CD8-positive, alpha-beta T cell (primary cell): ENCODE measurements at regions of chr5 and their contacts with region 1.

Region 1: DNA sequence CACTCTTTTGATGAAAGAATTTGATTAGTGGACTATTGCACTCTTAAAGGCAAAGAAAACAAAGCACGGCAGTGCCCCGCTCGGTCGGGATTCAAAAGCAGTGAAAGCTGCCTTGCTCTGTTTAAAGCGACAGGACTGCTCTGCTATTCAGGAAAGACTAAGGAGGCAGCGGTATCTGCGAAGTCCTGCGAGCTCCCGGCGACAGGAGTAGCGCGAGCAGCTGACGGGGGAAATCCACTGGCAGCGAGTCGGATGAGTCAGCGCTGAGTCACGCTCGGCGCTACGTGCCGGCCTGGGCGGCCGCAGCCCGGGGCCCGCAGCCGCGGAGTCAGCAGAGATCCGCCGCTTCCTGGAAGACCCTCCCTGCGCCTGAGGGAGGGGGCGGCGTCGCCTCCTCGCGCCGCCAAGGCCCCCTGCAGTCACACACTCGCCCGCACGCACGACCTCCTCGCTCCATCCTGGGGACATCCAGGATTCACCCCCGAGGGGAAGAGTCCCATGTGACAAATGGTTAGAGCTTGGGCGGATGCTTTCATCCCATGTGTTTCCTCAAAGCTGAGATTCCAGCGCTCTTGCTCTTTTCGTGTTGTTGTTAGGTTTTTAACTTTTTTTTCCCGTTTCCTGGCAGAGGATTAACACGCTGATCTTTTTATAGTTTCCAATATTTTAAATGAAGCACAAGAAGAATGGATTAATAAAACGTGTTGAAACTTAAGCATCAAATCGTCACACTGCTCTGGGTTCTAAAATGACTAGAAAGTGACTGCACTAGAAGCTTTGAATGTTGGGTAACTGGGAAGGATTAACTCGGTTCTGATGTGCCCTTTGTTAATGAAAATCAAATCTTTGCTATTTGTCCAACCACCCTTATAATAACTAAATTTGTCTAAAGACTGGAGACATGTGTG is 102.5 kb downstream of the ARRDC3 start:
- DNase-seq: peak; percentile 53 to 95 (median 85)
- ATAC-seq: peak; percentile 84
- H3K4me3 ChIP-seq: peak overlapping the region; percentile 58 to 79
- H3K4me3 Mint-ChIP-seq: peak overlapping the region; percentile 84
- H3K27ac ChIP-seq: peak overlapping the region; percentile 16 to 28
- H3K27ac Mint-ChIP-seq: peak overlapping the region; percentile 84
- H3K4me1 ChIP-seq: peaks cover 8% of the 10 kb centered on the region
- H3K4me1 Mint-ChIP-seq: peaks cover 26% of the 10 kb centered on the region
- H3K27me3 ChIP-seq: no peaks in the 10 kb centered on the region
- H3K27me3 Mint-ChIP-seq: no peaks in the 10 kb centered on the region
- CTCF ChIP-seq: no peak

Region 2: GRCh38 chr5:91244380-91245073 is 36.1 kb before region 1 on chr5:
- CTCF ChIA-PET with region 1: no interaction called
- POLR2A ChIA-PET with region 1: interaction called, 4 read pairs
- intact Hi-C with region 1: loop called in 1 of 2 experiments (anchors 5 kb)
- DNase-seq: no peak
- ATAC-seq: no peak
- H3K4me3 ChIP-seq: no peak overlapping the region
- H3K4me3 Mint-ChIP-seq: no peak overlapping the region
- H3K27ac ChIP-seq: no peak overlapping the region
- H3K27ac Mint-ChIP-seq: no peak overlapping the region
- H3K4me1 ChIP-seq: no peaks in the 10 kb centered on the region
- H3K4me1 Mint-ChIP-seq: no peaks in the 10 kb centered on the region
- H3K27me3 ChIP-seq: no peaks in the 10 kb centered on the region
- H3K27me3 Mint-ChIP-seq: no peaks in the 10 kb centered on the region
- CTCF ChIP-seq: no peak

Region 3: DNA sequence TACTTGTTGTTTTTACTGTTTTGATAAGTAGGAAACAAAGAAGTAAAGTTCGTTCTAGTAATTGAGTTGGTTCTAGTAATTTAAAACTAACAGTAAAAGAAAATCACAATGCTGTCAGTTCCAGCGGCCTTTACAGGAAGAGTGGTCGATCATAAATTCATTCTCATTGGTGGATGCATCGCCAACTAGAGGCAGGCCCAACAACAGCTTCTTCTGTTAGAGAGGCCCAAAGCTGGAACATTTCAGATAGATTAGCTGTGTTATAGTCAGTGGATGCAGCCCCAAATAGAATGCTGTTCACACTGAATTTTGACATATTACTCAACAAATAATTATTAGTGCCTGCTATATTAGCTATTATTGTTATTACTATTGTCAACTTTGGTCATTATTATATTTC is 21.7 kb after region 1 on chr5:
- CTCF ChIA-PET with region 1: no interaction called
- POLR2A ChIA-PET with region 1: no interaction called
- intact Hi-C with region 1: loop called in 1 of 2 experiments (anchors 2 kb)
- DNase-seq: no peak
- ATAC-seq: no peak
- H3K4me3 ChIP-seq: no peak overlapping the region
- H3K4me3 Mint-ChIP-seq: no peak overlapping the region
- H3K27ac ChIP-seq: no peak overlapping the region
- H3K27ac Mint-ChIP-seq: no peak overlapping the region
- H3K4me1 ChIP-seq: no peaks in the 10 kb centered on the region
- H3K4me1 Mint-ChIP-seq: no peaks in the 10 kb centered on the region
- H3K27me3 ChIP-seq: no peaks in the 10 kb centered on the region
- H3K27me3 Mint-ChIP-seq: no peaks in the 10 kb centered on the region
- CTCF ChIP-seq: no peak